Activated T-helper 2 cell treated with anti-CD3 and anti-CD28 coated beads, Interferon-gamma antibody, Interleukin-2, Interleukin-4, amounts not matched to agents 10 μg/mL and 5 μg/mL and 100 μg/mL, durations not matched to agents 14 hours and 24 hours and 36 hours (primary cell): ENCODE measurements at regions of chrX and their contacts with region 1.

Region 1: DNA sequence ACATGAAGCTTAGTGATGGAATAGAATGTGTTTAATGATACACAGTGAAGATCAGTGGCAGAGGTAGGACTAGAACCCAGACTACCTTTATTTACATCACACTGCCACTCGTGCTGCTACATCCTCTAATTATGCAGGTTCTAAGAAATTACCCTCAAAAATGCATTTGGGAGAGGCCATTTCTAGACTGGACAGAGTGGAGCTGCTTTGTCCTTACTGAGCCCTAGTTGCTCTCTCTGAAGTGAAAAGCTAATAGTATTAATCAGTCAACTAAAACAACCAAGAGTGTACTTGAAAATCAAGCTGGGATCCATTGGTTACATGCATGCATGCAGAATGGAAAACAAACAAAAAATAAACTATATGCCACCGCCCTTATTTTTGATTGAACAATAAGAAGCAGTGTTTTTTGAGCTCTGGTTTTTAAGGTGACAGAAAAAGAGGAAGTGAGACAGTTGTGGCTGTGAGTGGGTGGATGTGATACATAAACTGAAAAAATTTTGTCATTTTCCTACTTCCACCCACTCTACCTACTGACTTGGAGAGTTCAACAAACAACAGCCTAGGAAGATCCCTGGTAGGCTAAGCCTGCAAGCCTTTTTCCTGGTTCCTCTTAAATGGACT is 6.8 kb upstream of the VSIG4 start:
- DNase-seq: no peak
- H3K4me3 Mint-ChIP-seq: no peak overlapping the region
- H3K27ac Mint-ChIP-seq: peak overlapping the region; percentile 95
- H3K4me1 Mint-ChIP-seq: peaks cover 29% of the 10 kb centered on the region
- H3K27me3 Mint-ChIP-seq: no peaks in the 10 kb centered on the region

Region 2: DNA sequence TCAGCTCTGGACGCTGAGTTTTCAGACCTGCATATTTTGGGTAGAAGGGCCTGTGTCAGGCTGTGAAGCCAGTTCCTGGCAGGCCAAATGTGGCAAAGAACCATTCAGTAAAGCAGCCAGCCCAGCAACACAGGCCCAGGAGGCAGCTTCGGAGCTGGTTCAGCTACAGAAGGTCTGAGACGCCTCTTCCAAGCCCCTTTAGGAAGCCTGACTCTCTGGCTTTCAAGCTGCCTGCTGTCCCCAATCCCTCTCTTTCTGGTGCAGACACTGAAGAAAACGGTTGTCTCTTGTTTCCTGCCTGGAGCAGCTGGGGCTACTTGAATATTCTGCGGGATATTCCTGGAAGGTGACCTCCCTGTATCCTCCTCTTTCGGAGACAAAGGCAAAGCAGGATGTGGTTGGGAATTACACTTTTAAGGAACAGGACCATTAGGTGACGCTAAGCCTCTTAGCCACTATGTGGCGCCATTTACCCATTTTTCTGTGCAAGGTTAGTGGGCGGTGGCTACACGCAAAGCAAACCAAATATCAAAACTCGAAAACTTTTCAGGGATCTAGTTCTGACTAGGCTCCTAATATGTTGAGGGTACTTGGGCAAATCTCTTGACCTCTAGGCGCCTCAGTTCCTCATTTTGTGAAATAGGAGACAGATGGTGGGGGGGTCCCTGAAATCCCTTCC is 464.9 kb before region 1 on chrX:
- intact Hi-C with region 1: no loop called
- DNase-seq: peak; percentile 22
- H3K4me3 Mint-ChIP-seq: no peak overlapping the region
- H3K27ac Mint-ChIP-seq: no peak overlapping the region
- H3K4me1 Mint-ChIP-seq: peaks cover 7% of the 10 kb centered on the region
- H3K27me3 Mint-ChIP-seq: no peaks in the 10 kb centered on the region

Region 3: DNA sequence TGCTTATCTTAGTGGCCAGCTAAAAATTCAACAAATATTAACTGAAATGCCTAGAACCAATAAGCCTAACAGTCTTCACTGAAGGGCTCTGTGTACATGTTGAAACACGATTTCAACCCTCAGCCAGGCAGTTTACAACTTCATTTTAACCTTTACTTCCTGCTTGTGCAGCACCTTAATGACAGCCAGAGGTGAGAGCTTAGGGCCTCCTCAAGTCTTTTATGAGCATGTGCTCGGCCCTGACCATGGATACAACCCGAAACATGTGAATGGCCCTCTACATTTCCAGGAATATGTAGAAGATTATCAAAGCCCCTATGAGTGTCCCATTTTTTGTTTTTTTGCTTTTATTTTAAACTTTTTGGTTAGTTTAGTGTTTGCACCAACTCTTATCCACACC is 290.9 kb before region 1 on chrX:
- intact Hi-C with region 1: no loop called
- DNase-seq: no peak
- H3K4me3 Mint-ChIP-seq: no peak overlapping the region
- H3K27ac Mint-ChIP-seq: no peak overlapping the region
- H3K4me1 Mint-ChIP-seq: peaks cover 41% of the 10 kb centered on the region
- H3K27me3 Mint-ChIP-seq: no peaks in the 10 kb centered on the region

Region 4: GRCh38 chrX:65879977-65880799 is 166.5 kb before region 1 on chrX:
- intact Hi-C with region 1: no loop called
- DNase-seq: no peak
- H3K4me3 Mint-ChIP-seq: no peak overlapping the region
- H3K27ac Mint-ChIP-seq: no peak overlapping the region
- H3K4me1 Mint-ChIP-seq: peaks cover 19% of the 10 kb centered on the region
- H3K27me3 Mint-ChIP-seq: no peaks in the 10 kb centered on the region

Region 5: DNA sequence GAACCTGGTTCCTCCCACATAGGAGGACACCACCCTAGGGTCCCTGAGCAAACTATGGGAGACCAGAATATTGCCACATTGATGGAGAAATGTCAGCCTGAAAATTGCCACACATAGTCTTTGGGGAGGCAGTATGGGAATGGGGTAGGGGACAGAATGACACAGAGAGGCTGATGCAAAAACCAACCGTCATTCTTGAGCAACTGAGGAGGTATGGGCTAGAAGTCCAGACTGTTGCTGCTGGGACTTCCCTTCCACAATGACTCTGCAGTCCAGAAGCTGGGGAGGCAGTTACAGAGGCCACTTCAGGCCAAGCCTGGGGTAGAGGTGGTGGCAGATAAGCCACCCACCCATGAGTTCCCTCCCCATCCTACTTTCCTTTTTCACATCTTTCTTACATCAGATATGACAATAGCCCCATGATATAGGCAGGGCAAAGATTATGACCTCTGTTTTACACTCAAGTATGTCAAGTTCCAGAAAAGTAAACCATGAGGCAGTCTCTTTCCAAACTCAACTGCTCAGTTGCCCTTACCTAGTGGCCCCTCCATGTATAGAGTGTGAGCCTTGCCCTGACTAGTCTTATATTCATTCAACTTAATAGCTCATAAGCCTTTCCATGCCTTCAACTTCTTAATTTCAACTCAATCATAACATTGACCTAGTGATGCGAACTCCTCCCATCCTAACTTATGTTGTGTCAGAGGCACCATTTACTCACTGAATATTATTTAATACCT is 48.6 kb before region 1 on chrX:
- intact Hi-C with region 1: loop called (anchors 10 kb)
- DNase-seq: no peak
- H3K4me3 Mint-ChIP-seq: no peak overlapping the region
- H3K27ac Mint-ChIP-seq: no peak overlapping the region
- H3K4me1 Mint-ChIP-seq: peaks cover 52% of the 10 kb centered on the region
- H3K27me3 Mint-ChIP-seq: no peaks in the 10 kb centered on the region

Region 6: GRCh38 chrX:66074920-66075879 is 28.5 kb after region 1 on chrX:
- intact Hi-C with region 1: loop called (anchors 2 kb)
- DNase-seq: peak; percentile 30
- H3K4me3 Mint-ChIP-seq: peak overlapping the region; percentile 56
- H3K27ac Mint-ChIP-seq: peak overlapping the region; percentile 84
- H3K4me1 Mint-ChIP-seq: peaks cover 18% of the 10 kb centered on the region
- H3K27me3 Mint-ChIP-seq: no peaks in the 10 kb centered on the region

Region 7: GRCh38 chrX:66098162-66098561 is 51.4 kb after region 1 on chrX:
- intact Hi-C with region 1: loop called (anchors 5 kb)
- DNase-seq: no peak
- H3K4me3 Mint-ChIP-seq: no peak overlapping the region
- H3K27ac Mint-ChIP-seq: no peak overlapping the region
- H3K4me1 Mint-ChIP-seq: peaks cover 1% of the 10 kb centered on the region
- H3K27me3 Mint-ChIP-seq: no peaks in the 10 kb centered on the region